BJ (cell line): ENCODE measurements at regions of chr11 and their contacts with region 1.

Region 1: GRCh38 chr11:355581-356458 is 13.5 kb upstream of the B4GALNT4 start:
- DNase-seq: peak; percentile 76
- H3K4me3 ChIP-seq: peak overlapping the region; percentile 32
- H3K27me3 ChIP-seq: no peaks in the 10 kb centered on the region; the same call in 1 of the 2 replicates
- CTCF ChIP-seq: no peak

Region 2: GRCh38 chr11:316031-316701 is 39.7 kb before region 1 on chr11:
- CTCF ChIA-PET with region 1: interaction called, 10 read pairs
- POLR2A ChIA-PET with region 1: interaction called, 12 read pairs
- DNase-seq: no peak
- H3K4me3 ChIP-seq: peak overlapping the region; percentile 47
- H3K27me3 ChIP-seq: no peaks in the 10 kb centered on the region
- CTCF ChIP-seq: no peak

Region 3: DNA sequence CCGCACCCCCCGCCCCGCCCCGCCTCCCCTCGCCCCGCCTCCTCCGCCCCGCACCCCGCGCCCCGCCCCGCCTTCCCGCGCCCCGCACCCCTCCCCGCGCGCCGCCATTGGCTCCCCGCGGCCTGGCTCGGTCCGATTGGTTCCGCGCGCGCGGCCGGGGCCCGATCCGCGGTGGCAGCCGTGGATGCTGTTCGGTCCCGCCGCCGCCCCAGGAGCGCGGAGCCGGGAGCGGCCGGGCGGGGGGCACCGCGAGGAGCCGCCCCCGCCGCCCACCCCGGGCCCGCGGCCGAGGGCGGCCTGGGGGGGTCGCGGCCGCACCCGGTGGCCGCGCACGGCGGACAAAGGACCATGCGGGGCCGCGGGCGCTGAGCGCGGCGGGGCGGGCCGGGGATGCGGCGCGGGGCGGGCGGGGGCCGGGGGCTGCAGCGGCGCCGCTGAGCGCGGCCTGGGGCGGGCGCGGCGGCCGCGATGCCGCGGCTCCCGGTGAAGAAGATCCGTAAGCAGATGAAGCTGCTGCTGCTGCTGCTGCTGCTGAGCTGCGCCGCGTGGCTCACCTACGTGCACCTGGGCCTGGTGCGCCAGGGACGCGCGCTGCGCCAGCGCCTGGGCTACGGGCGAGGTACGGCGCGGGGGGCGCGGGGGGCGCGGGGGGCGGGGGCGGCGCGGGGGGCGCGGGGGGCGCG is 13.7 kb after region 1 on chr11 and contains the start of gene B4GALNT4:
- CTCF ChIA-PET with region 1: no interaction called
- POLR2A ChIA-PET with region 1: no interaction called
- DNase-seq: no peak
- H3K4me3 ChIP-seq: peak within 1 kb of the TSS; percentile 39
- H3K27me3 ChIP-seq: peaks cover 26% of the 10 kb centered on the region
- CTCF ChIP-seq: no peak
- polyA plus RNA-seq, gene B4GALNT4: 3.0 and 5.4 TPM in 2 replicates

Region 4: DNA sequence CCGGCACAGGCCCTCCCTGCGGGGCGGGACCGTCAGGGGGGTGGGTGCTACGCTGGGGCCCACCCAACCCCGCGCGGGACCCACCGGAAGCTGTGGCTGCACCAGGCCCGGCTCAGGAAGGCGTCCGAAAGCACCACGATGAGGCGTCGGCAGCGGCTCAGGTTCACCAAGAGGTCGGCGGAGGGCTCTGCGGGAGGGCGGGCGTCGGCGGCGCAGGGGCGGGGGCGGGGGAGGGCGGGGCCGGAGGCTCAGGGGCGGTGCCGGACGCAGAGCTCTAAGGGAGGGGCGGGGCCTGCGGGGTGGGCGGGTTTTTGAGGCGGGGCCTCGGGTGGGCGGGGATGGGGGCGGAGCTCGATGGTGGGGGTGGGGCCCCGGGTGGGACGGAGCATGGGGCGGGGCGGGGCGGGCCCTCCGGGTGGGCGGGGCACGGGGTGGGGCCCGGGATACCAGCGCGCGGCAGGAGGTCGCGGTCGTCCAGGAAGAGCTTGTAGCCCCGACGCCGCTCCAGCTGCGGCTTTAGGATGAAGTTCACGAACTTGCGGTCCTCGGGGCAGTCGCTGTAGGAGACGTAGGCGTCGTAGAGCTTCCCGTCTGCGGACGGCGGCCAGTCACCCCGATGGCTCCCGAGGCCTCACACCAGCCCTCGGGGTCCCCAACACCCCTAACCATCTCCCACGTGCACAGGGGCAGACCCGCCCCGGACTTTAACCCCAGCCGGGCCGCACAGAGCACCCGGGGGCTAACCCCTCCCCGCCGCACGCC is 51.3 kb after region 1 on chr11:
- CTCF ChIA-PET with region 1: no interaction called
- POLR2A ChIA-PET with region 1: interaction called, 17 read pairs
- DNase-seq: no peak
- H3K4me3 ChIP-seq: peak overlapping the region; percentile 53
- H3K27me3 ChIP-seq: no peaks in the 10 kb centered on the region
- CTCF ChIP-seq: no peak